ENCODE measurements at regions of chr6 and their contacts with region 1.

Region 1: GRCh38 chr6:83067448-83068413 is at the start of gene DOP1A:
- DNase-seq: peak; percentile 98
- ATAC-seq: peak; percentile 96
- total RNA-seq, gene DOP1A: 42.7 TPM

Region 2: DNA sequence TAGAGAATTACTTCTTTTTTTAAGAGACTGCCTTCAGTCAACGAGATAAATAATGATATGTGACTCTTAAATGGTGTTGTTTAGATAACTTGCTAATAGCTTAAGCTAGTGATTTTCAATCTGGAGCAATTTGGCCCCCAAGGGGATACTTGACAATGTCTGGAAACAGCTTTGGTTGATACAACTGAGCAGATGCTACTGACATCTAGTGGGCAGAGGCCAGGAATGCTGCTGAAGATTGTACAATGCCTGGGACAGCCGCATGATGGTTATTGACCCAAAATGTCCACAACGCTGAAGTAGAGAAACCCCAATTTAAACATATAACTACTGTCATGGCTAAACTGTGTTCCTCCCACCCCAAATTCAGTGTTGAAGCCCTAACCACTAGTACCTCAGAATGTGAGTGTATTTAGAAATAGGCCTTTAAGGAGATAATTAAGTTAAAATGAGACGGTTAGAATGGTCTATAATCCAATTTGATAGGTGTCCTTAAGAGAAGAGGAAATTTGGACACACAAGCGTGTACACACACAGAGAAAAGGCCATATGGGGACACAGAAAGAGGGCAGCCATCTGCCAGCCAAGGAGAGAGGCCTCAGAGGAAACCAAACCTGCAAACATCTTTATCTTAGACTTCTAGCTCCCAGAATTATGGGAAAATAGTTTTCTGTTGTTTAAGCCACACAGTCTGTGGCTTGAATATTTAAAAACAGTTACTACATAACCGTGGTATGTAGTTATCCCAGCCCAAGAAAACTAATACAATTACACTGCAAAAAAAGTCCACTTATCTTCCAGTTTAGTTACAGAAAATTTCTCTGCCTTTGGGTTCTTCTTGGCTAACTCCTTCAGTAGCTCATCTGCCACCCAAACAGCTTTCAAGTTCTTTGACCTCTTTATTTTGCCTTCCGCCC is 147.7 kb after region 1 on chr6:
- intact Hi-C with region 1: loop called (anchors 5 kb)
- DNase-seq: peak; percentile 62
- ATAC-seq: peak; percentile 96